Caco-2 (cell line): ENCODE measurements at regions of chr20 and their contacts with region 1.

Region 1: DNA sequence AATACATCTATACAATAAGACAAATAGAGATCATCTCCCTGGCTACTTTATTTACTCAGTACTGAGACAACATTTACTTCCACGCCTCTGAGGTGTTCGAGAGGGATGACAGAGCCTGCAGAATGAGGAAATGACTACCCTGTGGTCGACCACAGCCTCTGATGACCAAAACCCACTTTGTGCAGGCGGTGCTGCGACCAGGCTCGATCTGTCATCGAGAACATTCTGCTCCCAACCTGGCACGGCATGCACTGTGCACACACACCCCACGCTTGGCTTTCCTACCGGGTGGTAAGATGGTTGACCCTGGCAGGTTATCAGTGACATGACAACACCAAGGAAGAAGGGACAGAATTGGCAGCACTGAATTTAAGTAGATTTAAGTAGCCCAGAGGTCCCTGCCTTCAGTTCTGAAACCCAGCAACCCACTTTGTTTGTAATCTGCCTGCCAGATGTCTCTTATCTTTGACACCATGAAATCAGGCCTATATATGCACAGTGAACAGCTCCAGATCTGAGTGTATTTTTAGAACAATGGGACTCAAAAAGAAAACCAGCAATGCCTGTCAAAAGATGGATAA is 42.6 kb downstream of the TTI1 start:
- DNase-seq: no peak
- H3K4me3 ChIP-seq: no peak overlapping the region
- H3K4me3 Mint-ChIP-seq: no peak overlapping the region
- H3K27ac Mint-ChIP-seq: no peak overlapping the region
- H3K4me1 ChIP-seq: peaks cover 47% of the 10 kb centered on the region
- H3K4me1 Mint-ChIP-seq: peaks cover 39% of the 10 kb centered on the region
- H3K27me3 ChIP-seq: no peaks in the 10 kb centered on the region
- H3K27me3 Mint-ChIP-seq: no peaks in the 10 kb centered on the region
- CTCF ChIP-seq: no peak

Region 2: DNA sequence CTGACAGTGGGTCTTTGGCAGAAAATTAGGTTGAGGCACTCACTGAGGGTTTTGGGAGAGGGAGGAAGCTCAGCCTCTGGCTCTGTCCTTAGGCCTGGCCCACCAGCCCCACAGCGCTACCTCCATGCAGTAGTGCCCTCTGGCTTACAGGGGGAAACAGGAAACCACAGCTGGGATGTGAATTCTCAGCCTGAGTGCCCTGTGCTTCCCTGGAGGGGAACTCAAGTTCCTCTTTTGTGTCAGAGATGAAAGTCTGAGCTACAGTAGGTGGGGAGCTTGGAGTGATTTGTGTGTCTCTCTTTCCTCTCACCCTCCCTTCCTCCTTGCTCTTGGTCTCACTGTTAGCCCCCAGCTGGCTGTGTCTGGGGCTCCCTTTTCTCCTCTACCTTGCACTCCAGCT is 414.8 kb before region 1 on chr20:
- CTCF ChIA-PET with region 1: interaction called, 5 read pairs
- POLR2A ChIA-PET with region 1: no interaction called
- intact Hi-C with region 1: loop called (anchors 10 kb)
- DNase-seq: peak in 1 of 2 experiments; percentile 40
- H3K4me3 ChIP-seq: no peak overlapping the region
- H3K4me3 Mint-ChIP-seq: no peak overlapping the region
- H3K27ac Mint-ChIP-seq: no peak overlapping the region
- H3K4me1 ChIP-seq: no peaks in the 10 kb centered on the region
- H3K4me1 Mint-ChIP-seq: no peaks in the 10 kb centered on the region
- H3K27me3 ChIP-seq: peaks cover 1% of the 10 kb centered on the region; the same call in 1 of the 2 replicates
- H3K27me3 Mint-ChIP-seq: peaks cover 17% of the 10 kb centered on the region
- CTCF ChIP-seq: no peak

Region 3: DNA sequence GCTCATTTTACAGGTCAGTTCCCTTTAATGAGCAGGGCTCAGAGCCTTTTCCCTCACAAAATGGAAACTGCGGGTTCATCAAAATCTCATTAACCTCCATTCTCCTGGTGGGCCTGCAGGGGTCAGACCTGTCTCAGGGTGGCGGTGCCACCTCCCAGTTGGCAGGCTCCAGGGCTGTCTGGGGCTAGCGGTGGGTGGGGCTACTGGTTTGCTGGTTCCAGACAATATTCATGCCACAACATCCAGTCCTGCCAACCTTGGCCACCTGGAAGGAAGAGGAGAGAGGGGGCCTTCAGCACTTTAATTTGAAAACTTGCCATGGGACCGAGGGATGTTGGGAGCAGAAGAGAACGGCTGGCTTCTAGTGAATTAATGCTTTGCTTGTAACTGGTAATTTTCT is 338.7 kb before region 1 on chr20:
- CTCF ChIA-PET with region 1: no interaction called
- POLR2A ChIA-PET with region 1: no interaction called
- intact Hi-C with region 1: loop called (anchors 5 kb)
- DNase-seq: peak in 1 of 2 experiments; percentile 59
- H3K4me3 ChIP-seq: no peak overlapping the region
- H3K4me3 Mint-ChIP-seq: no peak overlapping the region
- H3K27ac Mint-ChIP-seq: no peak overlapping the region
- H3K4me1 ChIP-seq: peaks cover 7% of the 10 kb centered on the region
- H3K4me1 Mint-ChIP-seq: peaks cover 17% of the 10 kb centered on the region
- H3K27me3 ChIP-seq: no peaks in the 10 kb centered on the region
- H3K27me3 Mint-ChIP-seq: peaks cover 3% of the 10 kb centered on the region
- CTCF ChIP-seq: peak; percentile 63 to 73

Region 4: DNA sequence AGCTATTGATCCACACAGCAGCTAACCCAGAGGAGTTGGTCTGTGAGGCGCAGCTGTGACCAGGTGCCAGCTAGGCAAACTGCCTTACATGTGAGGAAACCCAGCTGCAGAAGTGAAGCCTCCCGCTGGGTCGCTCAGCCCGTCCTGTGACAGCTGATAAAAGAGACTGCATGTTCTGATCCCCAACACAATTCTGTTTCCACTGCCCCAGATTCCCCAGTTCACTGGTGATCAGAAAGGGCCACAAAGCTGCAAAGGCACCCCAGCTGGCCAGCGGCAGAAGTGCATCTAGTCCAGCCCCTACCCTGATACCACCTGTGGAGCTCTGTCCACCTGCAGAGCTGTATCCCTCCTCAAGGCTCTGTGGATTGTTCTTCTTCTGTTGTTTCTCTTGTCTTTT is 232.3 kb before region 1 on chr20:
- CTCF ChIA-PET with region 1: interaction called, 8 read pairs
- POLR2A ChIA-PET with region 1: interaction called, 3 read pairs
- intact Hi-C with region 1: loop called (anchors 5 kb)
- DNase-seq: peak; percentile 66 to 72
- H3K4me3 ChIP-seq: no peak overlapping the region
- H3K4me3 Mint-ChIP-seq: no peak overlapping the region
- H3K27ac Mint-ChIP-seq: no peak overlapping the region
- H3K4me1 ChIP-seq: no peaks in the 10 kb centered on the region
- H3K4me1 Mint-ChIP-seq: peaks cover 6% of the 10 kb centered on the region
- H3K27me3 ChIP-seq: no peaks in the 10 kb centered on the region
- H3K27me3 Mint-ChIP-seq: no peaks in the 10 kb centered on the region
- CTCF ChIP-seq: peak; percentile 75 to 78

Region 5: GRCh38 chr20:37845241-37845711 is 145.4 kb before region 1 on chr20:
- CTCF ChIA-PET with region 1: no interaction called
- POLR2A ChIA-PET with region 1: no interaction called
- intact Hi-C with region 1: no loop called
- DNase-seq: no peak
- H3K4me3 ChIP-seq: no peak overlapping the region
- H3K4me3 Mint-ChIP-seq: no peak overlapping the region
- H3K27ac Mint-ChIP-seq: no peak overlapping the region
- H3K4me1 ChIP-seq: peaks cover 16% of the 10 kb centered on the region
- H3K4me1 Mint-ChIP-seq: peaks cover 16% of the 10 kb centered on the region
- H3K27me3 ChIP-seq: no peaks in the 10 kb centered on the region
- H3K27me3 Mint-ChIP-seq: no peaks in the 10 kb centered on the region
- CTCF ChIP-seq: no peak

Region 6: DNA sequence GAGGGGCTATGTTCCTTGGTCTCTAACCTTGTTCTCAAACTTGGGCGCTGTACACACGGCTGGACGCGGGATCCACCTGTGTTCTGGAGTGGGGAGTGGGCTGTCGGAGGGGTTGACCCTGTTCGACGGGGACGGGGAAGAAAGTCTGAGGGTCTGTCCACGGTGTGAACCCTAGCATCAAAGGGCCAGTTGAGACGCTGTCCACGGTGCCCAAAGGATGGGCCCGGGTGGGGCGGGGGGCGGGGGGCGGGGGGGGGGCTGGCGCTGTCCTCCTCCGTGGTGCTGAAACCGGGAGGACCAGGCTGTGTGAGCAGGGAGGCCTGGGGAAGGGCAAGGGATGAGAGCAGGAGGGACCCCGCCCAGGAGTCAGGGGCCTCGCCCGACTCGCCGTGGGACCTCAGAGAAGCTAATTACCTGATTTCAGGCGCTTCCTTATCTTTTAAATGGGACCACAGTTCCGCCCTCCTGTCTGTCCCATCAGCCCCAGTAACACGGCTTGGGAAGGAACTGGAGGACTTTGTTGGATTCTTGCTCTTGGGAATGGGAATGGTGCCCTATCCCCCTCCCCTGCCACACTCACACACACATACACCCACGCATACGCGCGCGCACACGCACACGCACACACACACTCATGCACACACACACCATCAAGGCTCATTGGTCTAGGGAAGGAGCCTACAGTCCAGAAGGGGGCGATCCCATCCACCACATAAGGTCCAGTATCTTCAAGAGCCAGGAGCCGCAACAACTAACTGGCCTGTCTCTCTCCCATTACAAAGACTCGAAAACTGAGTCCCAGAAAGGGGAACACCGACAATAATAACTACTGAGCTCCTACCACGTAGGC is 88.8 kb before region 1 on chr20:
- CTCF ChIA-PET with region 1: interaction called, 3 read pairs
- POLR2A ChIA-PET with region 1: no interaction called
- intact Hi-C with region 1: loop called (anchors 5 kb)
- DNase-seq: peak; percentile 64 to 65
- H3K4me3 ChIP-seq: no peak overlapping the region
- H3K4me3 Mint-ChIP-seq: no peak overlapping the region
- H3K27ac Mint-ChIP-seq: no peak overlapping the region
- H3K4me1 ChIP-seq: no peaks in the 10 kb centered on the region
- H3K4me1 Mint-ChIP-seq: peaks cover 6% of the 10 kb centered on the region
- H3K27me3 ChIP-seq: peaks cover 4% of the 10 kb centered on the region
- H3K27me3 Mint-ChIP-seq: peaks cover 25% of the 10 kb centered on the region
- CTCF ChIP-seq: peak; percentile 29 to 45

Region 7: GRCh38 chr20:37941332-37941731 is 49.3 kb before region 1 on chr20:
- CTCF ChIA-PET with region 1: interaction called, 6 read pairs
- POLR2A ChIA-PET with region 1: no interaction called
- intact Hi-C with region 1: loop called (anchors 5 kb)
- DNase-seq: peak; percentile 56 to 59
- H3K4me3 ChIP-seq: no peak overlapping the region
- H3K4me3 Mint-ChIP-seq: no peak overlapping the region
- H3K27ac Mint-ChIP-seq: no peak overlapping the region
- H3K4me1 ChIP-seq: no peaks in the 10 kb centered on the region
- H3K4me1 Mint-ChIP-seq: no peaks in the 10 kb centered on the region
- H3K27me3 ChIP-seq: no peaks in the 10 kb centered on the region
- H3K27me3 Mint-ChIP-seq: no peaks in the 10 kb centered on the region
- CTCF ChIP-seq: peak; percentile 53 to 86